Dorsolateral prefrontal cortex (tissue), 120 donors: ENCODE measurements at regions of chr9 and their contacts with region 1.

Region 1: GRCh38 chr9:2872257-2872935 is 28.5 kb upstream of the PUM3 start:
- DNase-seq: peak in 1 of 10 donors; percentile 14
- H3K4me3 ChIP-seq: peak overlapping the region in 3 of 59 donors; percentile 3 to 25 (median 12)
- H3K27ac ChIP-seq: no peak overlapping the region
- H3K27me3 ChIP-seq: peaks cover 0 to 9% (median 0%) of the 10 kb centered on the region in 45 donors
- CTCF ChIP-seq: peak in 52 of 56 donors; percentile 25 to 69 (median 48)

Region 2: GRCh38 chr9:2602704-2603116 is 269.7 kb before region 1 on chr9:
- intact Hi-C with region 1: no loop called
- DNase-seq: no peak
- H3K4me3 ChIP-seq: no peak overlapping the region
- H3K27ac ChIP-seq: no peak overlapping the region
- H3K27me3 ChIP-seq: no peaks in the 10 kb centered on the region
- CTCF ChIP-seq: no peak

Region 3: DNA sequence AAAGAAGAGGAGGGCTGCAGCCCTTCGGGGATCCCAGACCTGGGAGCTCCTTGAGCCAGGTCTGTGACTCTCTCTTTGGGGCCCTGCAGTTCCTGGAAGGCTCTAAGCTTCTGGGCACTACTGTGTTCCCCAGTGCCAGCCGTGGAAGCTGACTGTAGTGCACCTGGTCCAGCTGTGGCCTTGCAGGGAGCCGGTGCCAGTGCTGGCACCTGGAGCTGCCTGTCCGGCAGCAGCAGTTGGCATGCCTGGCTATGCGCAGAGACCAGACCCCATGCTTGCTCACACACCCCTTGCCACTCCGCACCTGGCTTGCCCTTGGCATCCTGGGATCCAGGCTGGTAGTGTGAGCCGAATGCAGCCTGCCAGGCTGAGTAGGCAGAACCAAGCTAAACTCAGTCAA is 62.5 kb after region 1 on chr9:
- intact Hi-C with region 1: loop called in 1 of 2 experiments (anchors 10 kb)
- DNase-seq: no peak
- H3K4me3 ChIP-seq: no peak overlapping the region
- H3K27ac ChIP-seq: no peak overlapping the region
- H3K27me3 ChIP-seq: peaks cover 0 to 7% (median 0%) of the 10 kb centered on the region in 45 donors
- CTCF ChIP-seq: no peak

Region 4: DNA sequence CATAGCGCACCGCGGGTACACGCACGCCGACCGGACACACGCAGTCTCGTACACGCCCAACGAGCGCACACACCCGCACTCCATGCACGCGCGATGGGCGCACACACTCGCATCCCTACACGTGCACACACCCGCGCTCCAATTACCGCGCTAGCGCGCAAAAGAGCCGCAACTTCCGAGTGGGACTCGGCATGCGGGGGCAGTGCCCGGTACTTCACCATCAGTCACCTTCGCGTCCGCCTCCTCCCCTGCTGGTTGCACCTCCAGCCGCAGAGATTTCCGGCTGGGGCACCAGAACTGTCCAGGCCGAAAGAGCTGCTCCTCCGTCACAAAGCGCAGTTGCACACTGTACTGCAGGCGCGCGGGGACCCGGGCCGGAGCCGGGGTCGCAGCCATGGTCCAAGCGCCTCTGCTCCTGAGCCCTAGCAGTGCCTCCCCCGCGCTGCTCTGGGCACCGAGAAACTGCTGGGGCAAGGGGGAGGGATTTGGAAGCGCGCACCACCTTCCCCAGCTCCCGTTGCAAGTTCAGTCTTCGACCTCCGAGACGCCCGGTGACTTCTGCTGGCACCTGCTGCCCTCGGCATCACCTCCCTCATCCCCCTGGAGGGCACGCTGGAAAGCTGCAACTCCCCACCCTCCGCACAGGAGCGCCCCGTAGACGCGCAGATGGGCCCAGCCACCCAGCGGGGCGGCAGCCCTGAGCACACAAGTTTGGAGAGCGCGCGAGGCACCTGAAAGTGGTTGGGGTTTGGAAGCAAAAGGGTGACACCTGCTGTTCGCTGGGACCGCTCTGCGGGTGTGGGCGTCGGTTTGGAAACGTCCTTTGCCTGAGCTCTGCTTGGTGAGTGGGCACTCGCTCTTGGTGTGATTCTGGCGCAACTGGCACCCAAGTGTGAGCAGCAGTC is 308.9 kb after region 1 on chr9:
- intact Hi-C with region 1: loop called in 1 of 2 experiments (anchors 10 kb)
- DNase-seq: peak in 9 of 10 donors; percentile 22 to 74 (median 60)
- H3K4me3 ChIP-seq: peak overlapping the region; percentile 23 to 69 (median 54)
- H3K27ac ChIP-seq: no peak overlapping the region
- H3K27me3 ChIP-seq: peaks cover 0 to 46% (median 8%) of the 10 kb centered on the region in 45 donors
- CTCF ChIP-seq: peak in 39 of 56 donors; percentile 8 to 56 (median 29)